ENCODE measurements at regions of chr5 and their contacts with region 1.

Region 1: GRCh38 chr5:179907570-179908324 is at the start of gene TBC1D9B:
- DNase-seq: peak; percentile 82 to 91
- ATAC-seq: peak; percentile 89
- H3K4me3 ChIP-seq: peak within 1 kb of the TSS; percentile 82 to 83
- H3K27ac ChIP-seq: peak within 1 kb of the TSS in 1 of 2 donors; percentile 31
- H3K4me1 ChIP-seq: no peaks in the 10 kb centered on the region
- H3K27me3 ChIP-seq: no peaks in the 10 kb centered on the region
- total RNA-seq, gene TBC1D9B: 90.0 to 120 TPM

Region 2: GRCh38 chr5:179568721-179569120 is 339.0 kb before region 1 on chr5:
- intact Hi-C with region 1: no loop called
- DNase-seq: no peak
- ATAC-seq: no peak
- H3K4me3 ChIP-seq: no peak overlapping the region
- H3K27ac ChIP-seq: no peak overlapping the region
- H3K4me1 ChIP-seq: no peaks in the 10 kb centered on the region
- H3K27me3 ChIP-seq: no peaks in the 10 kb centered on the region

Region 3: GRCh38 chr5:179648410-179648809 is 259.3 kb before region 1 on chr5:
- intact Hi-C with region 1: no loop called
- DNase-seq: no peak
- ATAC-seq: no peak
- H3K4me3 ChIP-seq: no peak overlapping the region
- H3K27ac ChIP-seq: no peak overlapping the region
- H3K4me1 ChIP-seq: no peaks in the 10 kb centered on the region
- H3K27me3 ChIP-seq: no peaks in the 10 kb centered on the region

Region 4: DNA sequence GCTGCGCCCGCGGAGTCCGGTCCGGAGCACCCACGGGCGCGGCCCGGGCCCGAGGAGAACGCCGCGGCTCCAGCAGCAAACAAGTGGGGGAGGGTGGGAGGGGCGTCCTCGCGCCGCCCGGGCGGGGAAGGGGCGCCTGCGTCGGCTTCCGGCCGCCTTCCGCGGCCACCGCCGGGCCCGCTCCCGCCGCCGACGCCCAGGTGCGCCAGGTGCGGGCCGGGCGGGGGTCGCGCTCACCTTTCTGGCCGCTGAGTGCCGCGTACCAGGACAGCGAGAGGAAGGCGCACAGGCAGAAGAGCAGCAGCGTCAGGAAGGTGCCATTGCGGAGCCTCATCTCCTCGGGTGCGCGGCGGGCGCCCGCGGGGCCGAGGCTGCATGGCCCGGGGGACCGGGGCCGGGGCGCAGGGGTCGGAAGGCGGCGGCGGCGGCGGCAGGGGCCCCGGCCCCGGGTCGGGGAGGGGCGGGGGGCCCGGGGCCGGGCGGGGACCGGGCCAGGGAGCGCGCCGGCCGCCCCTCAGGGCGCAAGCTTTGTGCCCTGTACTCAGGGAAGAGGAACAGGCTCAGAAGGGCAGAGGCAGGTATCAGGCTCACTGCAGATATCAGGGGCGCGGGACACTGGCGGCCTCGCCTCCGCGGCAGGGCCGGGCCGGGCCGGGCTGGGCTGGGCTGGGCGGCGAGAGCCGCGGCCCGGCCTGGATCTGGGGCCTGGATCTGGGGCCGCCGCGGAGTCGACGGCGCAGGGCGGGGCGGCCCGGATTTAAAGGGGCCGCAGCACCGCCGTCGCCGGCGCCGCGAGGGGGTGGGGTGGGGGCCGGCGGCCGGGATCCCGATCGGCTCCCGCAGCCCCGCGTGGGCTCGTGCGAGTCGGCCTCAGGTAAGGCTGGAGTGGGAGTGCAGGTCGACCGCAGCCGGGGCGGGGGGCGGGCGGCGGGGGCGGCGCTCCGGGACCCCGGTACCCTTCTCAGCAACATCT is 101.2 kb before region 1 on chr5 and contains the start of gene MGAT4B:
- intact Hi-C with region 1: loop called (anchors 5 kb)
- DNase-seq: peak; percentile 87 to 91
- ATAC-seq: peak; percentile 92
- H3K4me3 ChIP-seq: peak within 1 kb of the TSS; percentile 98
- H3K27ac ChIP-seq: peak within 1 kb of the TSS; percentile 68 to 79
- H3K4me1 ChIP-seq: peaks cover 0 to 2% of the 10 kb centered on the region in 2 donors
- H3K27me3 ChIP-seq: no peaks in the 10 kb centered on the region
- total RNA-seq, gene MGAT4B: 56.0 to 78.8 TPM

Region 5: GRCh38 chr5:180071531-180072255 is 163.9 kb after region 1 on chr5 and contains the start of gene RNF130:
- intact Hi-C with region 1: loop called in 1 of 2 experiments (anchors 5 kb)
- DNase-seq: peak; percentile 97 to 98
- ATAC-seq: peak; percentile 98
- H3K4me3 ChIP-seq: peak within 1 kb of the TSS; percentile 77 to 91
- H3K27ac ChIP-seq: peak within 1 kb of the TSS; percentile 31 to 83
- H3K4me1 ChIP-seq: no peaks in the 10 kb centered on the region
- H3K27me3 ChIP-seq: no peaks in the 10 kb centered on the region
- total RNA-seq, gene RNF130: 71.7 to 95.8 TPM

Region 6: GRCh38 chr5:180090098-180090768 is 182.5 kb after region 1 on chr5:
- intact Hi-C with region 1: no loop called
- DNase-seq: peak; percentile 87 to 91
- ATAC-seq: peak; percentile 94
- H3K4me3 ChIP-seq: peak overlapping the region; percentile 42 to 84
- H3K27ac ChIP-seq: no peak overlapping the region
- H3K4me1 ChIP-seq: no peaks in the 10 kb centered on the region
- H3K27me3 ChIP-seq: no peaks in the 10 kb centered on the region

Measured in aorta (tissue), 5 donors.